Activated B cell treated with CpG ODN at 0.5 μM for 24 hours (primary cell): ENCODE measurements at regions of chr18 and their contacts with region 1.

Region 1: GRCh38 chr18:10490401-10491165 is 35.2 kb upstream of the NAPG start:
- DNase-seq: peak; percentile 53
- ATAC-seq: peak; percentile 100
- H3K4me3 Mint-ChIP-seq: no peak overlapping the region
- H3K27ac Mint-ChIP-seq: peak overlapping the region; percentile 72
- H3K4me1 Mint-ChIP-seq: peaks cover 25% of the 10 kb centered on the region
- H3K27me3 Mint-ChIP-seq: no peaks in the 10 kb centered on the region
- CTCF ChIP-seq: no peak

Region 2: DNA sequence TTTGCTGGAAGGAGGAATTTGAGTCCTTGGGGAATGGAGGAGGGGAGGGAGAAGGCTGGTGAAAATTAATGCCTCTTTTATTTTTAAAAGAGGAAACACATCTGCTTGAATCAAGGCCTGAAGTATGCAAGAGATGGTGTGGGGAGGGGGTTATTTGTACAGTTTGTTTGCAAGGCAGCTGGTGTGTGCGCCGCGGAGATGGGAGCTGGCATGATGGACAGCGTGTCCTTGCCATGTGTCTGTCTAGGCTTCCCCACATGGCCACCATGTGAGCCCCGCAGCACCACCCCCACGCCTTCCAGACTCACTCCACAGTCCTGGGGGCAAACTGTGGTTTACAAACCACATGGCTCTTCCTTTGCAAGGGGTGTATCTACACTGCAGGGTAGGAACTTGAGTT is 190.9 kb before region 1 on chr18:
- CTCF ChIA-PET with region 1: no interaction called
- POLR2A ChIA-PET with region 1: no interaction called
- intact Hi-C with region 1: loop called (anchors 5 kb)
- DNase-seq: no peak
- ATAC-seq: no peak
- H3K4me3 Mint-ChIP-seq: no peak overlapping the region
- H3K27ac Mint-ChIP-seq: no peak overlapping the region
- H3K4me1 Mint-ChIP-seq: peaks cover 46% of the 10 kb centered on the region
- H3K27me3 Mint-ChIP-seq: no peaks in the 10 kb centered on the region
- CTCF ChIP-seq: no peak

Region 3: DNA sequence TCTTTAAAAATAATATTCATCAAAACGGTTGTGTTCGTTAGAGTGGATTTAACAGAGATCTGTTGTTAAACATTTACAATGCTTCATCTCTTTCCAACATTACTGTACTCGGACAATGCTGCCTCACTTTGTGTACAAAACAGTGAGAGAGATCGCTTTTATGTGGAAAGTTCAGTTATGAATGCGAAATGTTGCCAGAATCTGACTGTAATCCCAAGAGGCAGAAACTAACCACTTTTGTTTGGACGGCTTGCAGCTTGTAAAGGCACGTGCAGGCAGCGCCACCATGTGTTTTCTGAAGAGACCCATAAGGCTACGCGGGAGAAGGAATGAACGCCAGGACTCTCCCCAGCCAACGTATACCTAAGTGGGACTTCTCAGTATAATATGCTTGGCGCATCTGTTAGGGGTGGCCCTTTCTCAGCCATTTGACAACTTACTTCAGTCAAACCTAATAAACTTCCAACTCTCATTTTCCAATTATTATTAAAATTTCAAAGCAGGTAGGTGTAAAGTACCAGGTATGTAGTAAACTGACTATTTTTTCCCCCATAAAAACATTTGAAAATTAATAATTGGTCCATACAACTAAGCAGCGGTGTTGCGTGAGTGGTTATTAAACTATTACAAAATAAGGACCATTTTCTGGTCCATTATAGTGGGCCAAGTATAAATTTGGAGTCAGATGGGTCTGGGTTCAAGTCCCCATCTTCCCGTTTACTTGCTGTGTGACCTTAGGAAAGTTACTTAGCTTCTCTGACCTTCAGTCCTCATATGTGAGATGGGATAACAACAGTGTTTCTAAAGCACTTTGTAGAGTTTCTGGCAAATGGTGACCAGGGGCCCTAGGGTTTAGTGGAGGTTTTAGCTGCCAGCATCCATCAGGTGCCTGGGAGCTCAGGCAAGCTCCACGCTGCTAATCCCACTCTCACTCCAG is 29.7 kb after region 1 on chr18:
- CTCF ChIA-PET with region 1: interaction called, 11 read pairs
- POLR2A ChIA-PET with region 1: no interaction called
- intact Hi-C with region 1: loop called (anchors 2 kb)
- DNase-seq: peak; percentile 37
- ATAC-seq: peak; percentile 94
- H3K4me3 Mint-ChIP-seq: no peak overlapping the region
- H3K27ac Mint-ChIP-seq: no peak overlapping the region
- H3K4me1 Mint-ChIP-seq: peaks cover 13% of the 10 kb centered on the region
- H3K27me3 Mint-ChIP-seq: peaks cover 12% of the 10 kb centered on the region
- CTCF ChIP-seq: no peak